Posterior cingulate gyrus (tissue), 11 donors: ENCODE measurements at regions of chr22 and their contacts with region 1.

Region 1: GRCh38 chr22:17171313-17172171 is 12.5 kb upstream of the HDHD5 start:
- DNase-seq: peak; percentile 77 to 98 (median 86)

Region 2: GRCh38 chr22:17084554-17085276 is 86.8 kb before region 1 on chr22 and contains the start of gene IL17RA:
- intact Hi-C with region 1: loop called (anchors 5 kb)
- DNase-seq: peak in 9 of 10 donors; percentile 56 to 95 (median 67)

Region 3: DNA sequence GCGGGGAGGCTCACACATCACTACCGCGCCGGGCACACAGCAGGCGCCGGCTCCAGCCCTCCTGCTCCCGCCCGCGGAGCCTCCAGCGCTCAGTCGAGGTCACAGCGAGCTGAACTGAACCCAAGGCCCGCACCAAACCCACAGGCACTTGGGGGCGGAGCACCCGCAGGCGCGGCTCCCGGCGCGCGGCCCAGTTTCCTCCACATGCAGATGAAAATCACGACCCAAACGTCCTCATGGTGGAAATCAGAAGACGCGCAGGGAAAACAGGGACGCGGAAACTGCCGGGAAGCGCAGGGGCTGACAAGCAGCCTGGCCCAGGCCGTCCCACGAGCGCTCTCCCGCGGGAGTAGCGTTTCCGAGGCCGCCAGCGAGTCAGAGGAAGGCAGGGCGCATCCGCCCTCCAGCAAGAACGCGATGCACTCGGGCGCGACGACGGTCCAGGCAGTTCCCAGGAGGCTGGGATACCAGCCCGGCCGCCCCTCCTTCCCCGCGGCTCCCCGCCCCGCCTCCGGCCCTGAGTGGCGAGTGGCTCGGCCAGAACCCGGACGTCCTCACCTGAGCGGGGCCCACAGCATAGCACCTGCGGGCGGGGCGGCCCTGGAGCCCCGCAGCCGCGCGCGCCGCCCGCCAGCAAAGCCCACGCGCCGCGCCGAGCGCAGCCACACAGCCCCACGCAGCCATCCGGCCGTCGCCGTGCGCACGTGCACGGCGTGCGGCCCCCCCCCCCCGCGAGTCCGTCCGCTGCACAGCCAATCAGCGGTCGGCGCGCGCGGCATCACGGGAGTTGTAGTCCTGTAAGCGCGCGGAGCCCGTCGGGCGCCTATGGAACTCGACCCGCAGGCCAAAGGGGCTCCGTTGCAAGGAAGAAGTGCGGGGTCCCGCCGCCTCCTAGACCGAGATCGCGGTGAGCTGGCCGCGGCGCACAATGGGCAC is 12.7 kb before region 1 on chr22 and contains the start of gene HDHD5:
- intact Hi-C with region 1: loop called (anchors 1 kb)
- DNase-seq: peak; percentile 87 to 98 (median 90)

Region 4: DNA sequence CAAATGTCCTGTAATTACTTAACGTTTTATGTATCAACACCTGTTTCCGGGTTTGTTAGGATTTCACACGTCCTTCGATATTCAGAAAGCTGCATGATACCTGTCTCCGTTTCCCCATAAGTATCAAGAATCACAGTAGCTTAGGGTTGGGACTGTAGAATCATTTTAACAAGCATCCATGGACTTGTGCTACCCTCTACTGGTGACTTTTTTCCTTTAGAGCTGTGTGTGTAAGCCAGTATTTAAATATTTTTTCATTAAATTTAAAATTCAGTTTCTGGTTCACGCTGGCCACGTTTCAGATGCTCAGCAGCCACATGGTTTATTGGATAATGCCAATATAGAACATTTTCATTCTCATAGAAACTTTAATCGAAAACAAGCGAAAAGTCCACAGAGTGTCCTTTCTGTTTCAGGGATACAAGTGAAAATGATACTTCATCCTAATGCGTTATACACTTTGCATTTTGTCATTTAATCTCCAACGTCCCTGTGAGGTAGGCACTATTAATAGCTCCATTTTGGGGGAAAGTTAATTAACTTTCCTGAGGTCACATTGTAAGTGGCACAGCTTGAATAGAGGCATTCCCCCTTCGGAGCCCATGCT is 330.2 kb after region 1 on chr22:
- intact Hi-C with region 1: loop called (anchors 1 kb)
- DNase-seq: peak in 1 of 10 donors; percentile 22

Region 5: GRCh38 chr22:17638432-17639246 is 467.1 kb after region 1 on chr22 and contains the start of gene BCL2L13:
- intact Hi-C with region 1: loop called (anchors 5 kb)
- DNase-seq: peak; percentile 81 to 98 (median 90)